ENCODE measurements at regions of chr13 and their contacts with region 1.

Region 1: GRCh38 chr13:79480954-79481684 is at the start of gene NDFIP2:
- DNase-seq: peak; percentile 66 to 96 (median 78)
- ATAC-seq: peak; percentile 89
- H3K4me3 ChIP-seq: peak within 1 kb of the TSS; percentile 79
- H3K4me3 Mint-ChIP-seq: peak within 1 kb of the TSS; percentile 90 to 99 (median 92)
- H3K27ac ChIP-seq: peak within 1 kb of the TSS; percentile 28
- H3K27ac Mint-ChIP-seq: peak within 1 kb of the TSS; percentile 71 to 95 (median 90)
- H3K4me1 ChIP-seq: peaks cover 6 to 12% of the 10 kb centered on the region in 2 donors
- H3K4me1 Mint-ChIP-seq: peaks cover 24 to 66% (median 46%) of the 10 kb centered on the region in 7 donors
- H3K27me3 ChIP-seq: no peaks in the 10 kb centered on the region
- H3K27me3 Mint-ChIP-seq: peaks cover 0 to 7% (median 0%) of the 10 kb centered on the region in 5 donors
- total RNA-seq, gene NDFIP2: 2.6 to 123 (median 4.9) TPM

Region 2: GRCh38 chr13:79405829-79406596 is 75.1 kb before region 1 on chr13 and contains the start of gene RBM26:
- CTCF ChIA-PET with region 1: no interaction called
- POLR2A ChIA-PET with region 1: interaction called, 3 read pairs
- intact Hi-C with region 1: loop called (anchors 1 kb)
- DNase-seq: peak; percentile 87 to 96 (median 93)
- ATAC-seq: peak; percentile 92
- H3K4me3 ChIP-seq: peak within 1 kb of the TSS; percentile 93
- H3K4me3 Mint-ChIP-seq: peak within 1 kb of the TSS in 5 of 10 donors; percentile 93 to 97 (median 95)
- H3K27ac ChIP-seq: peak within 1 kb of the TSS; percentile 91
- H3K27ac Mint-ChIP-seq: peak within 1 kb of the TSS in 5 of 9 donors; percentile 97 to 99 (median 99)
- H3K4me1 ChIP-seq: peaks cover 33 to 44% of the 10 kb centered on the region in 2 donors
- H3K4me1 Mint-ChIP-seq: peaks cover 31 to 49% (median 36%) of the 10 kb centered on the region in 7 donors
- H3K27me3 ChIP-seq: no peaks in the 10 kb centered on the region
- H3K27me3 Mint-ChIP-seq: no peaks in the 10 kb centered on the region
- total RNA-seq, gene RBM26: 75.4 to 136 (median 85.2) TPM

Region 3: GRCh38 chr13:79451500-79451962 is 29.6 kb before region 1 on chr13:
- CTCF ChIA-PET with region 1: interaction called, 3 read pairs
- POLR2A ChIA-PET with region 1: interaction called, 4 read pairs
- intact Hi-C with region 1: loop called (anchors 1 kb)
- DNase-seq: peak; percentile 17 to 90 (median 51)
- ATAC-seq: peak; percentile 99
- H3K4me3 ChIP-seq: no peak overlapping the region
- H3K4me3 Mint-ChIP-seq: peak overlapping the region in 8 of 10 donors; percentile 10 to 84 (median 32)
- H3K27ac ChIP-seq: no peak overlapping the region
- H3K27ac Mint-ChIP-seq: peak overlapping the region; percentile 1 to 92 (median 43)
- H3K4me1 ChIP-seq: peaks cover 19 to 28% of the 10 kb centered on the region in 2 donors
- H3K4me1 Mint-ChIP-seq: peaks cover 24 to 64% (median 46%) of the 10 kb centered on the region in 7 donors
- H3K27me3 ChIP-seq: no peaks in the 10 kb centered on the region
- H3K27me3 Mint-ChIP-seq: no peaks in the 10 kb centered on the region

Region 4: GRCh38 chr13:79491715-79492114 is 10.6 kb after region 1 on chr13:
- CTCF ChIA-PET with region 1: no interaction called
- POLR2A ChIA-PET with region 1: interaction called, 4 read pairs
- intact Hi-C with region 1: loop called (anchors 1 to 2 kb)
- DNase-seq: no peak
- ATAC-seq: no peak
- H3K4me3 ChIP-seq: no peak overlapping the region
- H3K4me3 Mint-ChIP-seq: peak overlapping the region in 8 of 10 donors; percentile 58 to 86 (median 68)
- H3K27ac ChIP-seq: no peak overlapping the region
- H3K27ac Mint-ChIP-seq: peak overlapping the region in 8 of 9 donors; percentile 2 to 93 (median 27)
- H3K4me1 ChIP-seq: peaks cover 0 to 17% of the 10 kb centered on the region in 2 donors
- H3K4me1 Mint-ChIP-seq: peaks cover 28 to 87% (median 78%) of the 10 kb centered on the region in 7 donors
- H3K27me3 ChIP-seq: no peaks in the 10 kb centered on the region
- H3K27me3 Mint-ChIP-seq: no peaks in the 10 kb centered on the region